Heart right ventricle (tissue), 16 donors: ENCODE measurements at regions of chr20 and their contacts with region 1.

Region 1: GRCh38 chr20:62571667-62572344 is 70.5 kb upstream of the SLCO4A1 start:
- DNase-seq: no peak
- ATAC-seq: peak; percentile 11 to 60 (median 37)
- H3K4me3 ChIP-seq: no peak overlapping the region
- H3K27ac ChIP-seq: peak overlapping the region in 1 of 10 donors; percentile 6
- H3K4me1 ChIP-seq: peaks cover 0 to 25% (median 2%) of the 10 kb centered on the region in 9 donors
- H3K27me3 ChIP-seq: peaks cover 0 to 27% (median 15%) of the 10 kb centered on the region in 7 donors
- CTCF ChIP-seq: peak in 2 of 9 donors; percentile 17 to 25

Region 2: DNA sequence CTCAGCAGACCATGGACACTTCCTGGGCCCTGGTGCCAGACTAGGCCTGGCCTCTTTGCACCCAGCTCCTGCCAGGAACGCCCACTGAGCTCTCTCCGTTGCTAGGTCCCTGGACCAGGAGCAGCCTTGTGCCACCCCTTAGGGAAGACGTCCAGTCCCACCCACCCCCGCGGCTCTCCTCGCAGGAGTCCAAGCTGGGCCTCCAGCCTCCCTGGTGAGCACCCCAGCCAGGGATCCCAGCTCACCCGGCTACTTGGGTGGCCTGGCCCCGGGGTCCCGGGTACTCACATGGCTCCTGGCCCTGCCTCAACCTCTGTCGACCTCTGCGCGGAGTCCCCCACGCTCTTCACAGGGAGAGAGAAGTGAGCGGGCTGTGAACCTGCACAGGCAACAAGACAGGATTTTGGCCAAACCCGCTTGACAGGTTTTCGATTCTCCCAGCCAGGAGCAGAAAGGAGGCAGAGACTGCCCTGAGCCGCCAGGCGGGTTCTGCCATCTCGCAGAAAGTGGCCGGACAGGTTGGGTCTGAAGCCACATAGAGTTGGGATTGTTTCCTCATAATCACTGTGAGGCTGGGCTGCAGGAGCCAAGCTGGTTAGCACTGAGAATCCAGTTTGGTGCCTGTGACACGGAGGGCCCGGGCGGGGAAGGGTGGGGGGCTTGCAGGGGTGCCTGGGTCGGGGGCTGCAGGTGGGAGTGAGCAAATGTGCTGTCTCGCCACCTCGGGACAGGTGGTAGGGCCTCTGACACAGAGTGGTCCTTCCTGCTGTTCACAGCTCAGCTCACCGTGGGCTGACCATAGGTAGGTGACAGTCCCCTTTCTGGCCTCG is 144.4 kb before region 1 on chr20 and contains the start of gene RBBP8NL:
- intact Hi-C with region 1: loop called in 1 of 10 experiments (anchors 10 kb)
- DNase-seq: no peak
- ATAC-seq: no peak
- H3K4me3 ChIP-seq: no peak within 1 kb of the TSS
- H3K27ac ChIP-seq: no peak within 1 kb of the TSS
- H3K4me1 ChIP-seq: no peaks in the 10 kb centered on the region
- H3K27me3 ChIP-seq: peaks cover 0 to 41% (median 18%) of the 10 kb centered on the region in 7 donors
- CTCF ChIP-seq: no peak
- total RNA-seq, gene RBBP8NL: not detected

Region 3: GRCh38 chr20:62516345-62516744 is 55.5 kb before region 1 on chr20:
- intact Hi-C with region 1: loop called in 1 of 10 experiments (anchors 10 kb)
- DNase-seq: no peak
- ATAC-seq: peak in 6 of 8 donors; percentile 7 to 60 (median 42)
- H3K4me3 ChIP-seq: no peak overlapping the region
- H3K27ac ChIP-seq: no peak overlapping the region
- H3K4me1 ChIP-seq: peaks cover 0 to 16% (median 11%) of the 10 kb centered on the region in 9 donors
- H3K27me3 ChIP-seq: peaks cover 0 to 46% (median 22%) of the 10 kb centered on the region in 7 donors
- CTCF ChIP-seq: peak in 8 of 9 donors; percentile 14 to 60 (median 38)

Region 4: GRCh38 chr20:62961310-62961783 is 389.5 kb after region 1 on chr20:
- intact Hi-C with region 1: no loop called
- DNase-seq: no peak
- ATAC-seq: peak in 3 of 8 donors; percentile 14 to 64 (median 41)
- H3K4me3 ChIP-seq: peak overlapping the region in 3 of 10 donors; percentile 28 to 33 (median 33)
- H3K27ac ChIP-seq: peak overlapping the region in 1 of 10 donors; percentile 48
- H3K4me1 ChIP-seq: peaks cover 0 to under 1% (median 0%) of the 10 kb centered on the region in 9 donors
- H3K27me3 ChIP-seq: no peaks in the 10 kb centered on the region
- CTCF ChIP-seq: no peak